MCF 10A (cell line): ENCODE measurements at regions of chr4 and their contacts with region 1.

Region 1: GRCh38 chr4:30714408-30715027 is 5.7 kb upstream of the PCDH7 start:
- DNase-seq: peak; percentile 77
- H3K4me3 Mint-ChIP-seq: no peak overlapping the region
- H3K27ac Mint-ChIP-seq: no peak overlapping the region
- H3K4me1 Mint-ChIP-seq: peaks cover 10% of the 10 kb centered on the region
- H3K27me3 Mint-ChIP-seq: no peaks in the 10 kb centered on the region
- CTCF ChIP-seq: peak; percentile 59

Region 2: GRCh38 chr4:29081234-29081955 is 1633.1 kb before region 1 on chr4:
- CTCF ChIA-PET with region 1: no interaction called
- POLR2A ChIA-PET with region 1: no interaction called
- intact Hi-C with region 1: loop called (anchors 5 kb)
- DNase-seq: peak; percentile 30
- H3K4me3 Mint-ChIP-seq: no peak overlapping the region
- H3K27ac Mint-ChIP-seq: no peak overlapping the region
- H3K4me1 Mint-ChIP-seq: no peaks in the 10 kb centered on the region
- H3K27me3 Mint-ChIP-seq: no peaks in the 10 kb centered on the region
- CTCF ChIP-seq: peak; percentile 46

Region 3: GRCh38 chr4:30863021-30863420 is 148.5 kb after region 1 on chr4:
- CTCF ChIA-PET with region 1: no interaction called
- POLR2A ChIA-PET with region 1: no interaction called
- intact Hi-C with region 1: loop called (anchors 10 kb)
- DNase-seq: peak; percentile 31
- H3K4me3 Mint-ChIP-seq: no peak overlapping the region
- H3K27ac Mint-ChIP-seq: no peak overlapping the region
- H3K4me1 Mint-ChIP-seq: peaks cover 9% of the 10 kb centered on the region
- H3K27me3 Mint-ChIP-seq: no peaks in the 10 kb centered on the region
- CTCF ChIP-seq: no peak

Region 4: GRCh38 chr4:31045724-31046318 is 331.3 kb after region 1 on chr4:
- CTCF ChIA-PET with region 1: interaction called, 6 read pairs
- POLR2A ChIA-PET with region 1: interaction called, 3 read pairs
- intact Hi-C with region 1: loop called (anchors 2 kb)
- DNase-seq: peak; percentile 57
- H3K4me3 Mint-ChIP-seq: no peak overlapping the region
- H3K27ac Mint-ChIP-seq: no peak overlapping the region
- H3K4me1 Mint-ChIP-seq: peaks cover 9% of the 10 kb centered on the region
- H3K27me3 Mint-ChIP-seq: no peaks in the 10 kb centered on the region
- CTCF ChIP-seq: peak; percentile 55

Region 5: DNA sequence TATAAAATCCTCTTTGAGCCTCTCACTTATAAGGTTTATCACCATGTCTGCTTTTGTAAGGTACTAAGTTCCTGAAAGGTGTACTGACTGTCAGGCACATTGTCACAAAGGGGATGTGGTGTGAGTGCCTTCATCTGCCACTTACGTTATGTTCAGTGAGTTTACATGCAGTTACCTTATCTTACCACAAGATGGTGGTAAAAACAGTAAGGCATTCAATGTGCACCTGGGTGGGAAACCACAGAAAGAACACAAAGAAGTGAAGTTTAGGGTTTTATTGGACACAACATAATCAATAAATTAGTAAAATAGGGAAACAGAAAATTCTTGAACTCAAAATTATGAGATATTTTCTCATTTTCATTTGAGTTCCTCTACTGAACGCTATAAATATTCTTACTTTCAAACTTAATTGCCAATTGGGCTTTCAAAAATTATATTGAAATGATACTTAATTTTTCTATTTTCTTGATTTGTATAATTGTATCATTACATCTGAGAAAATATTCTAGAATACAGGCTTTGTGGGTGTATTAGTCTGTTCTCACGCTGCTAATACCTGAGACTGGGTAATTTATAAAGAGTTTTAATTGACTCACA is 656.4 kb after region 1 on chr4:
- CTCF ChIA-PET with region 1: interaction called, 4 read pairs
- POLR2A ChIA-PET with region 1: no interaction called
- intact Hi-C with region 1: loop called (anchors 2 kb)
- DNase-seq: peak; percentile 73
- H3K4me3 Mint-ChIP-seq: no peak overlapping the region
- H3K27ac Mint-ChIP-seq: no peak overlapping the region
- H3K4me1 Mint-ChIP-seq: no peaks in the 10 kb centered on the region
- H3K27me3 Mint-ChIP-seq: no peaks in the 10 kb centered on the region
- CTCF ChIP-seq: peak; percentile 66

Region 6: DNA sequence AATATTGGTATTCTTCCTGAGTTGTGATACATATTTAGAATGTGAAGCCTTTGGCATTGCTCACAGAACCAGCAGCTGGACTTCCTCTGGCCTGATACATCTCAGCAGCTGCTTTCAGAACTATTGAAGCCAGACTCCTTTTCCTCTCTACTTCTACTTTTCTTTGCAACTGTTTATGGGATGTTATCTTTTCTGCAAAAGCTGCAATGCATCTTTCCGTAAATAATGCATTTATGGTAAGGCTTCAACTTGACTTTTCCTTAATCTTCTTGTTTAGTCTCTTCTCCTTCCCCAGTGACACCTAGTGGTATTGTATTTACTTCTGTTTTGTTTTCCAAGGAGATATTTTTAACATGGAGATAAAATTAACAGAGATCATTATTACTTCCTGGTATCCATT is 1554.3 kb after region 1 on chr4:
- CTCF ChIA-PET with region 1: no interaction called
- POLR2A ChIA-PET with region 1: no interaction called
- intact Hi-C with region 1: loop called (anchors 10 kb)
- DNase-seq: peak; percentile 7
- H3K4me3 Mint-ChIP-seq: no peak overlapping the region
- H3K27ac Mint-ChIP-seq: no peak overlapping the region
- H3K4me1 Mint-ChIP-seq: peaks cover 10% of the 10 kb centered on the region
- H3K27me3 Mint-ChIP-seq: no peaks in the 10 kb centered on the region
- CTCF ChIP-seq: no peak